ENCODE measurements at regions of chr16 and their contacts with region 1.

Region 1: GRCh38 chr16:15899538-15900100 is 11.2 kb upstream of the CEP20 start:
- DNase-seq: no peak
- ATAC-seq: no peak
- H3K4me3 ChIP-seq: no peak overlapping the region
- H3K27ac ChIP-seq: no peak overlapping the region
- H3K4me1 ChIP-seq: peaks cover 0 to 6% (median 0%) of the 10 kb centered on the region in 12 donors
- H3K27me3 ChIP-seq: no peaks in the 10 kb centered on the region
- CTCF ChIP-seq: no peak
- POLR2A ChIP-seq: no peak

Region 2: GRCh38 chr16:15843635-15844279 is 55.9 kb before region 1 on chr16:
- intact Hi-C with region 1: no loop called
- DNase-seq: no peak
- ATAC-seq: no peak
- H3K4me3 ChIP-seq: no peak overlapping the region
- H3K27ac ChIP-seq: peak overlapping the region in 1 of 12 donors; percentile 91
- H3K4me1 ChIP-seq: no peaks in the 10 kb centered on the region
- H3K27me3 ChIP-seq: peaks cover 0 to 5% (median 0%) of the 10 kb centered on the region in 9 donors
- CTCF ChIP-seq: no peak
- POLR2A ChIP-seq: no peak

Region 3: DNA sequence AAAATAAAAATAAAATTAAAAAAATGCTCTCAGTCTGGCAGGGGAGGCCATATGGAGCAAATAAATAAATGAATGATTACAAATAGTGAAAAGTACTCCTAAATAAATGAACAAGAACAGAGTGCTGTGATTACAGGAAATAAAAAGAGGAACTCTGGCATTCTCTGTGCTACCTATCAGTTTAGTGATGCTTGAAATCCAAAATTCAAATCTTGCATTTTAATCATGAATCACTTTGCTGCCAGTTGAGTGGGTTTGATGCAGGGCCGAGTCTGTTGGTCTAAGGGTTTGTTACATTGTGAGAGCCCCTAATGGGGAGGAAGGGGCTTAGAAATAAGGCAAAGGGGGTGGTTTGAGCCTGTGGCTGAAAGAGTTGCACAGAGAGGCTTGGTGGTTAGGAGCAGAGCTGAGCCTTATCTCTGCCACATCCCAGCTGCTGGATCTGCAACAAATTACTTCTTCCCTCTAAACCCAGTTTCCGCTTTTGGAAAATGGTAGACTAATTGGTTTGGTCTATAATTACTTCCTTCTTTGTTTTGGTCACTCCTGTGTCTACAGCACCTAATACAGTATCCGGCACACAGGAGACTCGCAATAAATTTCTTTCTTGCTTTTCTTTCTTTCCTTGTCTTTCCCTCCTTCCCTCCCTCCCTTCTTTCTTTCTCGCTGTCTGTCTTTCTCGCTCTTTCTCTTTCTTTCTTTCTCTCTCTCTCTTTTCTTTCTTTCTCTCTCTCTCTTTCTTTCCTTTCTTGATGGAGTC is 43.5 kb after region 1 on chr16:
- intact Hi-C with region 1: loop called in 2 of 10 experiments (anchors 5 to 10 kb)
- DNase-seq: no peak
- ATAC-seq: no peak
- H3K4me3 ChIP-seq: no peak overlapping the region
- H3K27ac ChIP-seq: no peak overlapping the region
- H3K4me1 ChIP-seq: peaks cover 0 to 7% (median 0%) of the 10 kb centered on the region in 12 donors
- H3K27me3 ChIP-seq: no peaks in the 10 kb centered on the region
- CTCF ChIP-seq: no peak
- POLR2A ChIP-seq: no peak